ENCODE measurements at regions of chr1 and their contacts with region 1.

Region 1: DNA sequence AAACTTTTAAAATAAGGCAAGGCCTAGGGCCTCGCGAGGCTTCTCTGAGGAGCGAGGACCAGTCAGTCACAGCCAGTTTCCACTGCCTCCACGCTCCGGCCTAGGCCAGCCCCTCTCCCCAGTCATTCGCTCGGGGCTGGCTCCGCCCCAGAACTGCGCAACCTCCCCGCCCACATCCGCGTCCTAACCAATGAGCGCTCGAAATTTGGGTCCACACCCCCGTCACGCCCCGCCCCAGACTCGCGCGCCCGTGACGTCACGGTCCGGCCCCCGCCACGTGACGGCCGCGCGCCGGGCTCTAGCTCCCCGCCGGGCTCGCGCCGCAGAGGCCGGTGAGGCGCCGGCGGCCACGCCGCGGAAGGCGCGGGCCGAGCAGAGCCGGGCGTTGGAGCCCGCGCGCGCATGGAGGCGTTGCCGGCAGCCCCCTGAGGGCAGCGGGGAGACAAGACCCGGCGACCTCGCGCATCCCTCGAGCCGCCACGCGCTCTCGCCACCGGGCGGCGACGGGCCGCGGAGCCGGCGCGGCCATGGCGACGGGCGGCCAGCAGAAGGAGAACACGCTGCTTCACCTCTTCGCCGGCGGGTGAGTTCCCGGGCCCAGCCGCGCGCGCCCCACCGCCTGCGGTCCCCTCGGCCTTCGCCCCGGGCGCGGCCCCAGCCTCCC is at the start of gene SLC25A33:
- DNase-seq: peak; percentile 98
- H3K4me3 ChIP-seq: peak within 1 kb of the TSS; percentile 12 to 62 (median 52)
- H3K27ac ChIP-seq: peak within 1 kb of the TSS; percentile 70
- H3K4me1 ChIP-seq: peaks cover 15% of the 10 kb centered on the region
- H3K27me3 ChIP-seq: no peaks in the 10 kb centered on the region
- CTCF ChIP-seq: no peak
- POLR2A ChIP-seq: peak; percentile 90
- total RNA-seq, gene SLC25A33: 6.4 and 6.6 TPM in 2 replicates

Region 2: DNA sequence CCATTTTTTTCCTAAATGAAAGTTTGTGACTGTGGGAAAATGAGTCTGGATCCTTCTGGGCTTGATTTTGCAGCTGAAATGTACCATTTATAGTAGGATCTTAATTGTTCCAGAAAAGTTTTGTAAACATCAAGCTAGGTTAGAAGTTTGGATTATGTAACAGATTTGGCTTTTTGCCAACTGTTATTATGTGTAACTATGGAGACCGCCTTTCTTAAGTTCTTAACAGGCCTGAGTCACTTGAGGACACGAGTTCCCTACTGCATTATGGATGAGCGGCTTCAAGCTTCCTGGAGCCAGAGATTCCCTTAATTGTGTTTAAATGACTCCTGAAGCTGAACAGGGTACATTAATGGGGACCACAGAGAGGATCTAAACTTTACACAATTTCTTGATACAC is 22.1 kb after region 1 on chr1:
- CTCF ChIA-PET with region 1: interaction called, 4 read pairs
- POLR2A ChIA-PET with region 1: interaction called, 6 read pairs
- dilution Hi-C with region 1: no loop called
- intact Hi-C with region 1: loop called (anchors 1 kb)
- DNase-seq: peak; percentile 90
- H3K4me3 ChIP-seq: no peak overlapping the region
- H3K27ac ChIP-seq: peak overlapping the region; percentile 15
- H3K4me1 ChIP-seq: peaks cover 7% of the 10 kb centered on the region
- H3K27me3 ChIP-seq: no peaks in the 10 kb centered on the region
- CTCF ChIP-seq: no peak
- POLR2A ChIP-seq: no peak

Region 3: GRCh38 chr1:10170239-10170574 is 630.9 kb after region 1 on chr1:
- CTCF ChIA-PET with region 1: no interaction called
- POLR2A ChIA-PET with region 1: no interaction called
- dilution Hi-C with region 1: no loop called
- intact Hi-C with region 1: no loop called
- DNase-seq: no peak
- H3K4me3 ChIP-seq: no peak overlapping the region
- H3K27ac ChIP-seq: no peak overlapping the region
- H3K4me1 ChIP-seq: no peaks in the 10 kb centered on the region
- H3K27me3 ChIP-seq: no peaks in the 10 kb centered on the region
- CTCF ChIP-seq: no peak
- POLR2A ChIP-seq: no peak